Sciatic nerve (tissue), 2 donors: ENCODE measurements at regions of chr13 and their contacts with region 1.

Region 1: DNA sequence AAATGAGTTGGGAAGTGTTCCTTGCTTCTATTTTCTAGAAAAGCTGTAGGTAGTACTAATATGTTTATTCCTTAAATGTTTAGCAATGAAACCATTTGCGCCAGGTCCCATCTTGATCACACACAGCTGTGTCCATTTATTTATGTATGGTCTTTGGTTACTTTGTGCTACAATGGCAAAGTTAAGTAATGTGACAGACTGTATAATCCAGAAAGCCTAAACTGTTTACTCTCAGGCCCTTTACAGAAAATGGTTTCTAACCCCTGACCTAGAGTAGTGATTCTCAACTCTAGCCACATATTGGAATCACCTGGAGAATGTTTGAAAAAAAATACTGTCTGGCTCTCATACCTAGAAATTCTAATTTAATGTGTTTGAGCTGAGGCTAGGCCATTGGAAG is 21.3 kb downstream of the SLC46A3 start:
- DNase-seq: no peak
- ATAC-seq: no peak

Region 2: DNA sequence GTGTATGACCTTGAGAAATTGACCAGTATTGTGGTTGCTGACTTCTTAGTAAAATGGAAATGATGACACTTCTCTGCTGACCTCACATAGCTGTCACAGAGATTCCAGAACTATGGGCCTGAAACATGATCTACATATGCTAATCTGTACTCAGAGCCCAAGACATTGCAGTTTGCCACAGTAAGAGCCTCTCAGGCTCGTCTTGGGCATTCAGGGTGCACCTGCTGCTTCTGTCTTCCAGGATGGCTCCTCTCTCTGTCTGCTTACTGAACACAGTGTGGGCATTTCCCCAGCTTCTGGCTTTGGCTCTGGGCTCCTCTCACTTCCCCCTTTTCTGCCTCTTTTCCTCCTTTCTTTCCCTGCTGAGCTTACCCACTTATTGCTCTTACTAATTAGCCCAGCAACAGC is 43.6 kb after region 1 on chr13:
- intact Hi-C with region 1: loop called (anchors 1 kb)
- DNase-seq: no peak
- ATAC-seq: peak; percentile 32

Region 3: DNA sequence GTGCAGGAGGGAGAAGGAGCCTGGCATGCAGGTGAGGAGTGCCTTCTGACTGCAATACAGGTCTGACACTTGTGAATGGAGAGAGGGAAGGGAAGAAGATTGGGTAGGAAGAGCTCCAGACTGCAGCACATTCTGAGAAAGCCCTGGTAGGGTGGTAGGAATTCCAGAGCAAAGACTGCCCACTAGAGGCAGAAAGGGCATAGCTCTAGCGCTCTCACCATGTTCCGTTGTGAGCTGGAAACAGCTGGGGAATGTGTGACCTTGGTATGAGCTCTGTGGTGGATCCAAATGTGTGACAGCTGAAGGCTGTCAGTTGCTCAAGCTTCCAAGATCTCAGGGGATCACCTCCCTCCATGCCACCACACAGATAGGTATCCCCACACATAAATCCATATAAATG is 119.8 kb after region 1 on chr13:
- intact Hi-C with region 1: no loop called
- DNase-seq: no peak
- ATAC-seq: no peak